ENCODE measurements at regions of chr12 and their contacts with region 1.

Region 1: DNA sequence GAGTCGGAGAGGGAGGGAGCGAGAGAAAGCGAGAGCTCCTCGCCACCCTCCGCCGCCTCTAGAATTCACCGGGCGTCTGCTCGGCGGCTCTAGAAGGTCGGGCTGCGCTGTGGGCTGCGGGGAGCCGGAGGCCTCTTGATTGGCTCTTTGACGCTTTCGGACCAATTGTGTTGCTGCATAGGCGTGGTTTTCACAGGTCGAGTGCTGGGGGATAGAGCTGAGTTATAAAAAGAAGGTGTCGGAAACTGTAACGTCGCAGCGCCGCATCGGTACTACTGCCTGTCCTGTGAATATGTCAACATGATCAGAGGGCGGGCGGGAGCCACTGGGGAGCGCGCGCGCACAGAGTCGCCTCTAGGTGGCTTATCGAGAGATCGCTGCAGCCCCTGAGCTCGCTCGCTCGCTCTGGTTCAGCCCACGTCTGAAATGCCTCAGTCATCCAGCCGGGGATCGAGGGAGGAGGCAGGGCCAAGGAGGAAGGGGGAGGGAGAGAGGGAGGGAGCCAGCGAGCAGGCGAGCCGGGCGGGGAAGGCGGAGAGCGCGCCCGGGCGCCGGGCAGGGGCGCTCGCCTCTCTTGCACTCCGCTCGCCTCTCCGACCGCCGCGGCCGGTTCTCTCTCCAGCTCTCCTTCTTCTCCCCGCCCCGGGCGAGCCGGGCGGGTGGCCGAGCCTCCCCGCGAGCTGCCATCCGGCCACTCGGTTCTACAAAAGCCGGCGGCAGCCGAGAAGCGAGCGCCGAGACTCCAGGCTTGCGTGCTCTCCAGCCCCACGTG is at the start of gene TBX3:
- DNase-seq: peak; percentile 99
- H3K4me3 Mint-ChIP-seq: peak within 1 kb of the TSS; percentile 97
- H3K27ac Mint-ChIP-seq: peak within 1 kb of the TSS; percentile 86
- H3K4me1 Mint-ChIP-seq: peaks cover 17% of the 10 kb centered on the region
- H3K27me3 Mint-ChIP-seq: peaks cover 14% of the 10 kb centered on the region
- CTCF ChIP-seq: peak; percentile 60
- total RNA-seq, gene TBX3: 6.6 and 8.0 TPM in 2 replicates

Region 2: GRCh38 chr12:114648711-114649110 is 35.6 kb before region 1 on chr12:
- CTCF ChIA-PET with region 1: no interaction called
- POLR2A ChIA-PET with region 1: no interaction called
- intact Hi-C with region 1: no loop called
- DNase-seq: no peak
- H3K4me3 Mint-ChIP-seq: no peak overlapping the region
- H3K27ac Mint-ChIP-seq: no peak overlapping the region
- H3K4me1 Mint-ChIP-seq: no peaks in the 10 kb centered on the region
- H3K27me3 Mint-ChIP-seq: peaks cover 14% of the 10 kb centered on the region
- CTCF ChIP-seq: no peak

Region 3: DNA sequence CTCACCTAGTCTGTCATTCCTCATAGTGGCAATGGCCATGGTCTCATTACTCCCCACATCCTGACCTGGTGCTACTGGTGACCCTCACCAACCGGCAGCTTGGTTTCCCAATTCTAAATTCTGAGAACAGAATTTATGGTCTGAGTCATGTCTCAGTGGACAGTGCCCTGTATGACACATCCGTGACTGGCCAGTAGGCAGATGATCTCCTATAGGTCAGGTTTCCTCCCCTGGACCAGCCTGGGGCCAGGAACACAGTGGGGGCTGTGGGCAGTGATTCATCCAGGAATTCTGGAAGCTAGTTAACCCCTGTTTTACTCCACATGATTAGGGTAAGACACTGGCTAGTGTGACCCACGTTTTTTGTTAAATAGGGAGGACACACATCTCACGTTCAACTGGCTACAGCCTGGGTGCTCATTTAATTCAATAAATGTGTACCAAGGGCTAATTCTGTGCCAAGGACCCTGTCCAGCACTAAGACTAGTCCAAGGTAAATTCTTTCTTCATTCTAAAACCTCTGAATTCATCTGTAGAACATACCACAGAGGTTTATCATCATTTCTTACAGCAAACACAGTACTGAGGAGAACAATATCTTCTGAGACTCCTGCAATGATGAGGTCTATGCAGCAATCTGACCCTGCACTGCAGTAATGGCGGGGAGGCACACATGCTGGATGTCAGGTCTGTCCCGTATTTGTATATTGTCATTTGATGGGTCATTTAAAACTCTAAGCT is 249.3 kb after region 1 on chr12:
- CTCF ChIA-PET with region 1: interaction called, 3 read pairs
- POLR2A ChIA-PET with region 1: interaction called, 3 read pairs
- intact Hi-C with region 1: loop called (anchors 1 kb)
- DNase-seq: peak; percentile 94
- H3K4me3 Mint-ChIP-seq: peak overlapping the region; percentile 36
- H3K27ac Mint-ChIP-seq: peak overlapping the region; percentile 66
- H3K4me1 Mint-ChIP-seq: peaks cover 34% of the 10 kb centered on the region
- H3K27me3 Mint-ChIP-seq: no peaks in the 10 kb centered on the region
- CTCF ChIP-seq: no peak

Region 4: GRCh38 chr12:115227137-115227615 is 542.9 kb after region 1 on chr12:
- CTCF ChIA-PET with region 1: interaction called, 5 read pairs
- POLR2A ChIA-PET with region 1: interaction called, 16 read pairs
- intact Hi-C with region 1: loop called (anchors 2 kb)
- DNase-seq: peak; percentile 84
- H3K4me3 Mint-ChIP-seq: no peak overlapping the region
- H3K27ac Mint-ChIP-seq: no peak overlapping the region
- H3K4me1 Mint-ChIP-seq: peaks cover 11% of the 10 kb centered on the region
- H3K27me3 Mint-ChIP-seq: no peaks in the 10 kb centered on the region
- CTCF ChIP-seq: no peak

Region 5: DNA sequence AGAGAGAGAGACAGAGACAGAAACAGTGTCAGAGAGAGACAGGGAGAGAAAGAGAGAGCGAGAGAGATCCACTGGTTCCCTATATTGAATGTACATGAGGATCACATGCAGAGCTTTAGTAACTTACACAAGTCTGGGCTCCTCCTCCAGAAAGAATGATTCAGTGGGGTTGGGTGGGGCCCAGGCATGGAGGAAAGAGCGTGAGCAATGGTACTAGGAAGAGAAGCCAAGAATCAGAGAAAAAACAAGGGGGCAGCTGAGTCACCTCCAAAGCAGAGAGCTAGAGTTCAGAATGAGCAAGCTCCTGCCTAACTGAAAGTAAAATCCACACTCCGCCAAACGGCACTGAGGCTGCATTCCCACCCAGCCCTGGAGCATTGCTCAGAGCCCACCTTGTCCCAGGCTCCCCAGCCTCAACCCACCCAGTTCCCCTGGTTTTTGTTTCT is 669.7 kb after region 1 on chr12:
- CTCF ChIA-PET with region 1: no interaction called
- POLR2A ChIA-PET with region 1: interaction called, 54 read pairs
- intact Hi-C with region 1: loop called (anchors 1 kb)
- DNase-seq: peak; percentile 98
- H3K4me3 Mint-ChIP-seq: peak overlapping the region; percentile 84
- H3K27ac Mint-ChIP-seq: peak overlapping the region; percentile 99
- H3K4me1 Mint-ChIP-seq: peaks cover 42% of the 10 kb centered on the region
- H3K27me3 Mint-ChIP-seq: no peaks in the 10 kb centered on the region
- CTCF ChIP-seq: no peak

Region 6: GRCh38 chr12:115456946-115457689 is 772.8 kb after region 1 on chr12:
- CTCF ChIA-PET with region 1: no interaction called
- POLR2A ChIA-PET with region 1: interaction called, 4 read pairs
- intact Hi-C with region 1: loop called (anchors 5 kb)
- DNase-seq: peak; percentile 20
- H3K4me3 Mint-ChIP-seq: no peak overlapping the region
- H3K27ac Mint-ChIP-seq: no peak overlapping the region
- H3K4me1 Mint-ChIP-seq: no peaks in the 10 kb centered on the region
- H3K27me3 Mint-ChIP-seq: peaks cover 10% of the 10 kb centered on the region
- CTCF ChIP-seq: no peak

Measured in MCF 10A (cell line).